Mammary epithelial cell (primary cell): ENCODE measurements at regions of chr1 and their contacts with region 1.

Region 1: DNA sequence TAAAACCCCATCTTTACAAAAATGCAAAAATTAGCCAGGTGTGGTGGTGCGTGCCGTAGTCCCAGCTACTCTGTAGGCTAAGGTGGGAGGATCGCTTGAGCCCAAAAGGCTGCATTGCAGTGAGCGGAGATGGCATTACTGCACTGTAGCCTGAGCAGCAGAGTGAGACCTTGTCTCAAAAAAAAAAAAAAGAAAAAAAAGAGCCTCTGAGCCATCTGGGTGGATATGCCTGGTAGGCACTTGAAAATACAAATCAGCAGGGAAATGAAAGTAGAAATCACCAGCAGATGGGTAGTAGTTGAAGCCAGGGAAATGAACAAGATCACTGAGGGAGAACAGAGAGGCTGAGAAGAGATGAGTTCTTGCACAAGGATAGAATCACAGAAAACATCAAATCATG is 131.0 kb upstream of the HMCN1 start:
- DNase-seq: no peak
- H3K4me3 ChIP-seq: no peak overlapping the region
- H3K27ac ChIP-seq: no peak overlapping the region
- H3K4me1 ChIP-seq: no peaks in the 10 kb centered on the region
- H3K27me3 ChIP-seq: no peaks in the 10 kb centered on the region
- CTCF ChIP-seq: no peak

Region 2: DNA sequence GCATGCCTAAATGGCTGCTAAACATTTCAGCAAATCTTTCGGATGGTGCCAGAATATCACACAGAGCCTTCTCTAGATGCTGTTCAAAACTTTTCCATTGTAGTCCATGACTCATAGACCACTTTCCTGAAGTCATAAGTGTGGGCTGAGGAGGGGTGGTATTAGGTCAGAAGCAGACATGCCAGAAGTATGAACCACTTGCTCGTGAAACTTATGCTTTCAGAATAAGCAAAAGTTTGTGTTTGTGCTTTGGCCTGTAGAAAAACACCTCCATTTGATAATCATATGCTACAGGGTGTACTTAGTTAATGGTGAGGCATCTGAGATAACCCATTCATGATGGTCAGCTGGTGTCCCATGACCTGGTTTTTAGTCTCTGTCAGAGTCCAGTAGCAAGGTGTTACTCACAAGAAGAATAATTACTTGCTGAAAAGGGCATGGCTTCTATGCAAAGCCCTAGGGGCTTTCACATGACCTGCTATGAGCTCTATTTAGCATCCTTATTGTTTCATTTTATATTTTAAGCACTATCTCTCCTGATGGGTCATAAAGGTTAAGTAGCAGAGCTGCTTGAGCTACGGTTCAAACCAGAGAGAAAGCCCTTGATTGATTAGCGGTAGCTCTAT is 103.0 kb before region 1 on chr1:
- CTCF ChIA-PET with region 1: no interaction called
- dilution Hi-C with region 1: no loop called
- in situ Hi-C with region 1: no loop called
- intact Hi-C with region 1: loop called (anchors 5 kb)
- DNase-seq: peak; percentile 90
- H3K4me3 ChIP-seq: no peak overlapping the region
- H3K27ac ChIP-seq: peak overlapping the region; percentile 36
- H3K4me1 ChIP-seq: peaks cover 15% of the 10 kb centered on the region
- H3K27me3 ChIP-seq: no peaks in the 10 kb centered on the region
- CTCF ChIP-seq: no peak